A673 (cell line): ENCODE measurements at regions of chr12 and their contacts with region 1.

Region 1: GRCh38 chr12:110546339-110546738 is 36.8 kb downstream of the PPTC7 start:
- DNase-seq: peak; percentile 54
- H3K4me3 ChIP-seq: no peak overlapping the region
- H3K27ac ChIP-seq: peak overlapping the region; percentile 70
- H3K4me1 ChIP-seq: peaks cover 50% of the 10 kb centered on the region
- H3K27me3 ChIP-seq: no peaks in the 10 kb centered on the region
- CTCF ChIP-seq: no peak

Region 2: DNA sequence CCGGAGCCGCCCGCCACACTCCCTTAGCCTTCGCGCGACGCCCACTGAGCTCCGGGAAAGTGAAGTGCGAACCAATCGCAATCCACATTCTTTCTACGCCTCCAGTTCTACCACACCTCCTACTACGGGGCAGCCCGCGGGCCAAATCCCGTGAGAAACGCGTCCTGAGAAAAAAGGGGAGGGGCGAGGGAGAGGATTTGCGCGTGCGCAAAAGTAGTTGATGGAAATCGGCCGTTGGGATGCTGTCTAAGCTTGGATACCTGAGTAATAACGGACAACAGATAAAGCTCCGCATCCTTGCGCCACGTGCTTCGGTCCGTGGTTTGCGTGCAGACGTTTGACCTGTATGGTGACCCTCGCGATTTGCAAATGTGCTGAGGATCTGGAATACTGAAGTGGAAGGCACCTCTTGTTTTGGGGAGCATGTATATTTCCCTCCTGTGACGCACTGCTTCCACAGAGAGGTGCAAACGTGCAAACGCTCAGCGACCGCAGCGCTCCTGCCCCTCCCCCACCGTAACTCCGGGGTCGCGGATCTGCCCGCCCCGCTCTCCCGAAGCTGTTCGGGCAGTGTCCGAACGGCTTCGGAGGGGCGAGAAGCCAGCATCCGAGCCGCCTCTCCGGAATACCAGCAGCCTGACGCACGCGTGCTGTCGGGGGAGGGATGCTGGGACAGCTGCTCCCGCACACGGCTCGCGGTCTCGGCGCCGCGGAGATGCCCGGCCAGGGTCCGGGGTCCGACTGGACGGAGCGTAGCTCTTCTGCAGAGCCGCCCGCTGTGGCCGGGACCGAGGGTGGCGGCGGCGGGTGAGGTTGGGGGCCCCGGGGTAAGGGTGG is 77.9 kb before region 1 on chr12 and contains the starts of genes FAM216A and GPN3:
- CTCF ChIA-PET with region 1: no interaction called
- POLR2A ChIA-PET with region 1: no interaction called
- intact Hi-C with region 1: loop called (anchors 5 kb)
- DNase-seq: peak; percentile 99
- H3K4me3 ChIP-seq: peak within 1 kb of the TSS; percentile 83
- H3K27ac ChIP-seq: peak within 1 kb of the TSS; percentile 89
- H3K4me1 ChIP-seq: peaks cover 10% of the 10 kb centered on the region
- H3K27me3 ChIP-seq: no peaks in the 10 kb centered on the region
- CTCF ChIP-seq: no peak
- total RNA-seq, gene FAM216A: 14.0 and 17.5 TPM in 2 replicates
- total RNA-seq, gene GPN3: 51.4 and 52.7 TPM in 2 replicates

Region 3: DNA sequence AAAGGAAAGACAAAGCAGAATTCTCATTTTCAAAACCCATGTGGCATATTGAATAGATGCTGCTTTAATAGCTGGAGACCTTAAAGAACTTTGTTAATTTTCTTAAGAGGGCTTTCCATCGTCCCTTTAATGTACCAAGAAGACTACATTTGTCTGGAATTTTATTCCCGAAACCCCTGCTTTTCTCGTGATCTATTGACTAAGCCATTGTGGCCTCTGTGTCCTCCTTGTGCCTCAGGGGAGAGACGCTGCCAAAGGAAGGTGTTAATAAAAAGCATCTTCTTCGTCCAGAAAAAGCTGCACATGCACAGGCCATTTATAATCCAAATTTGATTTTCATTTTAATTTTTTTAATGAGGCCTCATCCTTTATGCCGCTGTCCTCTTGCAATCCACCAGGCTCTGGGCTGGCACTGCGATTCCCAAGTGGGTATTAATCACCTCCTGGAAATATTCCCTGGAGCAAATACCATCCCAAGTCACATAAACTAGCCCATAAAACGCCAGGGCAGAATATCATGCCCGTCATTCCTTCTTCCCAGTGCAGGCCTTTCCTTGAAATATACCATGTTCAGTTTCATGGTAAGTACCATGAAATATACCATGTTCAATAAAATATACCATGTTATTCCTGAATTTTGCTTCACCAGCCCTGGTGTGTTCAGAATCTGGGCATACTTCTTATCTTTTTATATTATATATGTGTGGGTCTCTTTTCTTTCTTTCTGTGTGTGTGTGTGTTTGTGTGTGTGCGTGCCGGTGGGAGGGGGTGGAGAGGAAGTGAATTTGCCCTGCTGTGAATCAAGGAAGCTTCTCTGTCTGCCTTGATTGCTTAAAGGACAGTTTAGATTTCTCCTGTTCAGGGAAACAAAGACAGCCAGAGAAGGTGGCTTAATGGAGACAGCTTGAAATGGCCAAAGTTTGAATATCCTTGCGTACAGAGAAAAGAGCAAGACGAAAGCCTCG is 675.0 kb after region 1 on chr12:
- CTCF ChIA-PET with region 1: no interaction called
- POLR2A ChIA-PET with region 1: no interaction called
- intact Hi-C with region 1: no loop called
- DNase-seq: no peak
- H3K4me3 ChIP-seq: no peak overlapping the region
- H3K27ac ChIP-seq: no peak overlapping the region
- H3K4me1 ChIP-seq: no peaks in the 10 kb centered on the region
- H3K27me3 ChIP-seq: no peaks in the 10 kb centered on the region
- CTCF ChIP-seq: no peak